ENCODE measurements at regions of chr2 and their contacts with region 1.

Region 1: DNA sequence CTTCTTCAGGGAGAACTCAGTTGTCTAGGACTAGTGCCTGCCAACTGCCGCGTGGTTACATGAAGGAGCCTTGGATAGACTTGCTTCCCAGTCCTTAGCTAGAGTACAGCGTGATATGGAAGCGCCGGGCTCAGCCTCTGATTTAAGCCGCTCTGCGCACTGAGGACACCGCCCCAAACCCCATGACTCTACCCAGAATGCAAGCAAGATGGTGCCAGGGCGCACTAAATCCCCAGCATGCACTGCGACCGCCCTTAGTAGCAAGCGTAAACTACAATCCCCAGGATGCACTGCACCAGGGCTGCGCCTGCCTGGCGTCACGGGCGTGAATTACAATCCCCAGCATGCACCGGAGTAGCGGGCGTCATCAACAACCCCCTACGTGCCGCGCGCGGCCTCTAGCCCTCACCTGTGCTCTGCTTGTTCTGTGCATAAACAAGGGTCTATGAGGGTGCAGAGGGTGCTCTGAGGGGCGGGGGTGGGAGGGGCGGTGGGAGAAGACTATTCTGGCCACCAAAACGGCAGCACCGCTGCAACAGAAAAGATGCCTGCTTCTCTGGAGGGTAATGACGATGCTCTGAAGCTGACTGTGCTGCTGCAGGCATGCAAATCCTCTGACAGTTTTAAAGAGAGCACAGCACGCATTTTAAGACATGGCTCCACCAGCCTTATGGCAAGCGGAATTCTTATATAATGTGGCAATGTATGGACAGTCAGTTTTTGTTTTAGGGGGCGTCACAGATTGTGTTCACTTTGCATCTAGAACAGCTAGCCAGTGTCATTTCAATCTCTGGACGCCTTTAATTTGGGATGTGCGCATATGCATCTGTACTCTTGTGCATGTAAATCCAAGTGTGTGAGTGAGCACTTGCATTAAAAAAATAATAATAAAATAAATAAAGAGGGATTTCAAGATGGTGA is 282.5 kb upstream of the MYT1L start:
- DNase-seq: peak; percentile 75 to 94 (median 86)
- ATAC-seq: peak; percentile 97
- H3K4me3 ChIP-seq: peak overlapping the region; percentile 52
- H3K4me3 Mint-ChIP-seq: peak overlapping the region; percentile 80
- H3K27ac ChIP-seq: peak overlapping the region in 1 of 2 donors; percentile 48
- H3K27ac Mint-ChIP-seq: peak overlapping the region; percentile 84
- H3K4me1 ChIP-seq: peaks cover 12% of the 10 kb centered on the region
- H3K4me1 Mint-ChIP-seq: peaks cover 10% of the 10 kb centered on the region
- H3K27me3 ChIP-seq: peaks cover 0 to 4% of the 10 kb centered on the region in 2 experiments
- H3K27me3 Mint-ChIP-seq: peaks cover 5% of the 10 kb centered on the region
- CTCF ChIP-seq: no peak

Region 2: DNA sequence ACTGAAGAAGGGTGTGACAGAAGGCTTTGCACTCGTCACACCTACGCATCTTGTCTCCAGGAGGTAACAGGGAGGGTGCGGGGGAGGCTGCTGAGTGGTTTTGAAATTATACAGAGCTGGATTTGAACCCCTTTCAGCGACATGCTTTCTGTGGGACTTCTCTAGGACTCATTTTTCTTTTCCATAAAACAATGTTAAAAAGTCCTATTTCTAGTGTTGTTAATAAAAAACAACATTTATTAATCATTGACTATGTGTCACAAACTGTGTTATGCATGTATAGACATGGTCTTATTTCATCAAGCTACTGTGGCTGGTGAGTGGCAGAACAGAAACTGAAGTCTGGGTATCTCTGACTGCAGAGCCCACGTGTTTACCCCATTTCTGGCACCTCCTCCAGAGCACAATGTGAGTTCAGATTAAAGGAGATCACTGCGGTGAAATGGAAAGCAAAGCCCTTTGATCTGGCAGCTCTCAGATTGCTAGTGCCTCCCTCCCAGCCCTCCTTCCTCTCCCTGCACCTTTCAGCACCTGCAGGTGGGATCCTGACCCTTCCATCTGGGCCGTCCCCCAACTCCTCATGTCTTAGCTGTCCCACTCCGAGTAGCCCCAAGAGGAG is 33.0 kb after region 1 on chr2:
- CTCF ChIA-PET with region 1: no interaction called
- POLR2A ChIA-PET with region 1: interaction called, 35 read pairs
- intact Hi-C with region 1: loop called (anchors 1 to 2 kb)
- DNase-seq: peak in 13 of 14 experiments; percentile 8 to 80 (median 46)
- ATAC-seq: peak; percentile 91
- H3K4me3 ChIP-seq: peak overlapping the region; percentile 22
- H3K4me3 Mint-ChIP-seq: peak overlapping the region; percentile 83
- H3K27ac ChIP-seq: peak overlapping the region in 1 of 2 donors; percentile 50
- H3K27ac Mint-ChIP-seq: peak overlapping the region; percentile 99
- H3K4me1 ChIP-seq: peaks cover 32% of the 10 kb centered on the region
- H3K4me1 Mint-ChIP-seq: peaks cover 43% of the 10 kb centered on the region
- H3K27me3 ChIP-seq: no peaks in the 10 kb centered on the region
- H3K27me3 Mint-ChIP-seq: no peaks in the 10 kb centered on the region
- CTCF ChIP-seq: no peak

Region 3: DNA sequence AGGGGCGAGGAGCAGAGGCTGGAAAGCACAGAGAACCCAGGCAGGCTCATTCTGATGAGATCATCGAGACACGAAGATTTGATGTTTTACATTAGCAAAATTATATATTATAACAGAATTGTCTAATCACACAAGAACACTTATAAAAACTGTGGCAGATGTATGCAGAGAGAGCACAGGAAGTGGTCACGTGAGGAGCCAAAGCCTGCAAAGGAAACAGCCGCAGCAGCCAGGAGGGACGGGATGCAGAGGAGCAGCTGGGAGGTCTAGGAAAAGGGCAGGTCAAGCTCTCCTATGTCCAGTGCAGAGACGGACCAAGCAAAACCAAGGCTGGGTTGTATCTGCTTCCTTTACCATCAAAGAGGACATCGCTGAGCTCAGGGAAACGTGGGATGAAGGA is 72.7 kb after region 1 on chr2:
- CTCF ChIA-PET with region 1: no interaction called
- POLR2A ChIA-PET with region 1: no interaction called
- intact Hi-C with region 1: loop called in 1 of 2 experiments (anchors 5 kb)
- DNase-seq: peak in 3 of 14 experiments; percentile 19 to 38 (median 29)
- ATAC-seq: no peak
- H3K4me3 ChIP-seq: peak overlapping the region; percentile 12
- H3K4me3 Mint-ChIP-seq: peak overlapping the region; percentile 55
- H3K27ac ChIP-seq: no peak overlapping the region
- H3K27ac Mint-ChIP-seq: peak overlapping the region; percentile 25
- H3K4me1 ChIP-seq: peaks cover 44% of the 10 kb centered on the region
- H3K4me1 Mint-ChIP-seq: peaks cover 86% of the 10 kb centered on the region
- H3K27me3 ChIP-seq: peaks cover 0 to 4% of the 10 kb centered on the region in 2 experiments
- H3K27me3 Mint-ChIP-seq: no peaks in the 10 kb centered on the region
- CTCF ChIP-seq: no peak

Region 4: GRCh38 chr2:3518496-3519254 is 905.1 kb after region 1 on chr2:
- CTCF ChIA-PET with region 1: no interaction called
- POLR2A ChIA-PET with region 1: no interaction called
- intact Hi-C with region 1: loop called in 1 of 2 experiments (anchors 10 kb)
- DNase-seq: peak; percentile 94 to 99 (median 98)
- ATAC-seq: peak; percentile 65
- H3K4me3 ChIP-seq: peak overlapping the region; percentile 87
- H3K4me3 Mint-ChIP-seq: peak overlapping the region; percentile 94
- H3K27ac ChIP-seq: peak overlapping the region; percentile 76 to 96
- H3K27ac Mint-ChIP-seq: peak overlapping the region; percentile 88
- H3K4me1 ChIP-seq: peaks cover 24% of the 10 kb centered on the region
- H3K4me1 Mint-ChIP-seq: peaks cover 46% of the 10 kb centered on the region
- H3K27me3 ChIP-seq: no peaks in the 10 kb centered on the region
- H3K27me3 Mint-ChIP-seq: no peaks in the 10 kb centered on the region
- CTCF ChIP-seq: no peak

Region 5: DNA sequence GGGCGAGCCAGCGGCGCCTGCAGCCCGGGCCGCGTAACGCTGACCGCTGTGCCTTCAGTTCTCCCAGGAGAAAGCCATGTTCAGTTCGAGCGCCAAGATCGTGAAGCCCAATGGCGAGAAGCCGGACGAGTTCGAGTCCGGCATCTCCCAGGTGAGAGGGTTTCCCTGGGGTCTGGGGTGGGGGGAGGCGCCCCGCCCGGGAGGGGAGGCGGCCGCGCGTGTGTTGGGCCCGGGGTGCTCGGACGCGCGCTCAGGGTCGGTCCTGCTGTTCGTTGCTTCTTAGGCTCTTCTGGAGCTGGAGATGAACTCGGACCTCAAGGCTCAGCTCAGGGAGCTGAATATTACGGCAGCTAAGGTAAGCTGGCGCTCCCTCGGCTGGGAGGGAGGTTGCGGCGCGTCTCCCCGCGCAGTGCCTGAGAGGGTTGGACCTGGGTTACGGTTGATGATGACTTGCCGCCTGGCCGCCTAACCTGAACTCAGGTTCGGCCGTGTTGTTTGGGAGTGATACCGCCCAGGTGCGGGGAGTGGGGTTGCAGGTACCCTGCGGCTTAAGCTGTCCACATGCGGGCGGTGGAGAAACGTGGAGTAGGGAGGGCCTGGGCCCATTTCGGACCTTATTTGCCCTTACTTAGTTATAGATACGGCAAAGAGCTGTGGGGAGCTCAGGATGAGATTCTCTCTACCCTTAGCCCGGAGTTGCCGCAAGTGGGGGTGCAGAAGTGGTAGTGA is 962.2 kb after region 1 on chr2:
- CTCF ChIA-PET with region 1: no interaction called
- POLR2A ChIA-PET with region 1: no interaction called
- intact Hi-C with region 1: loop called (anchors 5 to 10 kb)
- DNase-seq: peak in 10 of 14 experiments; percentile 18 to 66 (median 30)
- ATAC-seq: peak; percentile 43
- H3K4me3 ChIP-seq: peak overlapping the region; percentile 70
- H3K4me3 Mint-ChIP-seq: peak overlapping the region; percentile 89
- H3K27ac ChIP-seq: peak overlapping the region; percentile 76 to 89
- H3K27ac Mint-ChIP-seq: peak overlapping the region; percentile 93
- H3K4me1 ChIP-seq: peaks cover 28% of the 10 kb centered on the region
- H3K4me1 Mint-ChIP-seq: peaks cover 46% of the 10 kb centered on the region
- H3K27me3 ChIP-seq: no peaks in the 10 kb centered on the region
- H3K27me3 Mint-ChIP-seq: no peaks in the 10 kb centered on the region
- CTCF ChIP-seq: no peak